Head of caudate nucleus (tissue), 42 donors: ENCODE measurements at regions of chr12 and their contacts with region 1.

Region 1: DNA sequence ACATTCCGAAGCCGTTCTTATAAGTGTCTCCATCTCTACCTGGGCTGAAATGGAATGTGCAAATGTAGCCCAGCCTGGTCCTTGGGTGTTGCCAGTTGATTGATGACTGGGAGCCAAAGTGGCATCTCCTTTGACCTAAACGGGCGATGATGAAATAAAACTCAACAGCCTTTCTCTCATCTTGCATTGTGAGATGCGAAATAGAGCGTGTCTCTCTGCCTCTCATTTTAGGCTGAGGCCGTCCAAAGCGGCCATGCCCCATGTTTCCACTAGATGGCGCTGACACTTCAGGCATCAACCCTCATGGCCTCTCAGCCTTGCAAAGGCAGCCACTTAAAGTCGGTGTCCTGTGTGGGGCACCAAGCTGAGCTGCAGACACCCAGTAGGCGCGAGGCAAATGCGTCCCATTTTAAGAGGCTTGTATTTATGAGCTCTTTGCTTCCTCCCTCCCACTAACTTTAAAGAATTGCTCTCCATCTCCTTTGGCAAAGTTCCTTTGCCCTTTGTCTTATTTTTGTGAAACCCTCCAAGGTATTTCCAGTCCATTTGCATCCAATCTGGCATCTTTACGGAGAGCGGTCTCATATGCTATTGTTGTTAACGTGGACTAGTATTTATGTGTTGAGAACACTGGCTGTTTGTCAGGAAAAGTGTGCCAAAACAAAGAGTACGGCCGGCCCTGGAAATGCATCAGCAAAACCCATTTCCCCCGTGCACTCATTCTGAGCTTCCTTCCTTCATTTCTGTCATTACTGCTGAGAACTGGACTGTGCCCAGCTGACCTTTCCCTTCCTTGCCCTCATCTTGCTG is 25.0 kb downstream of the GPRC5A start:
- DNase-seq: peak; percentile 77 to 98 (median 94)

Region 2: GRCh38 chr12:12975322-12976077 is 59.2 kb after region 1 on chr12:
- intact Hi-C with region 1: loop called (anchors 2 kb)
- DNase-seq: peak in 41 of 42 donors; percentile 34 to 88 (median 68)

Region 3: DNA sequence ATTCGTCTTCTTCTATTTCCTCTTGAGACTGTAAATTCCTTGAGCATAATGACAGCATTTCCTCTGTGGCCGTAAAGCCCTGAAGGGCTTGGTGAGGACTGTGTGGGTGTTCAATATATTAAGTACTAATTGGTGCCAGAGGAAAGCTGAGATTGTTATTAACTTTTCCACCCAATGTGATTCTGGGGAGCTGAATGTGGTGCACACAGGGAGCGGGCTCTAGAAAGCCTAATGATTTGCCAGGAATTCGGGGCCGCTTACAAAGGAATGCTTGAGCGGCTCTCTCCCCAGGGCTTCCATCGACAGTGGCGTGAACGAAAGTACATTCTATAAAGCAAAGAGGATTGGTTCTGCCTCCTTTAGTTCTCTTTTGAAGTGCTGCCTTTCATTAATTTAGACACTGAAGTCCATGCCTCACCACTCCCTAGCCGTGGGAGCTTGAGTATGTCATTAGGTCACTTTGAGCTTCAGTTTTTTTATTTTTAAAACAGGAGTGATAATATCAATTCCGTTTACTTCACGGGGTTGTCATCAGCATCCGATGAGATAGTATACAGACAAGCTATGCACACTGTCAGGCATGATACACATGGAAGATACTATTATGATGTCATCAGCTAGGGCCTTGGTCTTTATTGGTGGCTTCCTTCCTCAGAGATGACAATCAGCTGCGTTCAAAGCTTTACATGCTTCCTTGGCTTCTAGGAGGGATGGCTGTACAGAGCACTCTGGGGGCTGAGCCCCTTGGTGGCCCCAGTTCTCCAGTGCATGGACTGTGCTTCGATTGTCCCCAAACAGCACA is 198.1 kb after region 1 on chr12:
- intact Hi-C with region 1: no loop called
- DNase-seq: no peak